ENCODE measurements at regions of chr2 and their contacts with region 1.

Region 1: GRCh38 chr2:233418761-233419625 is 64.7 kb downstream of the DGKD start:
- DNase-seq: peak; percentile 45 to 82 (median 58)
- ATAC-seq: peak; percentile 64 to 75
- H3K4me3 Mint-ChIP-seq: peak overlapping the region; percentile 87 to 96 (median 90)
- H3K27ac Mint-ChIP-seq: peak overlapping the region; percentile 94 to 99 (median 96)
- H3K4me1 Mint-ChIP-seq: peaks cover 56 to 100% (median 98%) of the 10 kb centered on the region in 4 donors
- H3K27me3 Mint-ChIP-seq: no peaks in the 10 kb centered on the region

Region 2: GRCh38 chr2:232795920-232796319 is 623.1 kb before region 1 on chr2:
- POLR2A ChIA-PET with region 1: no interaction called
- DNase-seq: no peak
- ATAC-seq: no peak
- H3K4me3 Mint-ChIP-seq: no peak overlapping the region
- H3K27ac Mint-ChIP-seq: peak overlapping the region in 5 of 10 donors; percentile 1 to 53 (median 18)
- H3K4me1 Mint-ChIP-seq: peaks cover 0 to 5% (median 1%) of the 10 kb centered on the region in 4 donors
- H3K27me3 Mint-ChIP-seq: no peaks in the 10 kb centered on the region

Region 3: GRCh38 chr2:233303252-233303651 is 115.7 kb before region 1 on chr2:
- POLR2A ChIA-PET with region 1: no interaction called
- DNase-seq: no peak
- ATAC-seq: no peak
- H3K4me3 Mint-ChIP-seq: no peak overlapping the region
- H3K27ac Mint-ChIP-seq: no peak overlapping the region
- H3K4me1 Mint-ChIP-seq: peaks cover 4 to 12% (median 9%) of the 10 kb centered on the region in 4 donors
- H3K27me3 Mint-ChIP-seq: no peaks in the 10 kb centered on the region

Region 4: GRCh38 chr2:233387667-233388528 is 31.1 kb before region 1 on chr2:
- POLR2A ChIA-PET with region 1: interaction called, 49 read pairs
- DNase-seq: peak in 6 of 10 donors; percentile 26 to 77 (median 58)
- ATAC-seq: peak; percentile 55 to 64
- H3K4me3 Mint-ChIP-seq: peak overlapping the region in 9 of 10 donors; percentile 2 to 88 (median 79)
- H3K27ac Mint-ChIP-seq: peak overlapping the region; percentile 89 to 96 (median 92)
- H3K4me1 Mint-ChIP-seq: peaks cover 44 to 82% (median 72%) of the 10 kb centered on the region in 4 donors
- H3K27me3 Mint-ChIP-seq: no peaks in the 10 kb centered on the region

Region 5: DNA sequence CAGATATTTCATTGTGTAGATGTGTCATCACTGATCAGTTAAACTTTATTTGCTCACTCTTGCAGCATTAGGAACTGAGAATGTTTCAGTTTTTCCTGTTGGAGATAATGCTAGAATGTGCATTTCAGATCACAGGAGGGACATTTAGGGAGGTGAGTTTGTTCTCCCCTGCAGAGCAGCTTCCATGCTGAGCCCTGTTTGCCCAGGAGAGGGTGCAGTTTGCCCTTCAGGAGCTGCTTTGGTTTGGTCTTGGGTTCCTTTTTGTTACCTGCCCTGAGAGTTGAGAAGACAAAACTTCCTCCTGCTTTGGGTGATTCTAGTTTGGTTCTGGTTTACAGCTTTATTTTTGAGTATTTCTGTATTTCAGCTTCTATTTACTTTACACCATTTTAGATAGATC is 14.8 kb before region 1 on chr2:
- POLR2A ChIA-PET with region 1: interaction called, 292 read pairs
- DNase-seq: peak; percentile 44 to 88 (median 70)
- ATAC-seq: peak; percentile 54 to 64
- H3K4me3 Mint-ChIP-seq: peak overlapping the region in 7 of 10 donors; percentile 30 to 76 (median 47)
- H3K27ac Mint-ChIP-seq: peak overlapping the region; percentile 53 to 94 (median 83)
- H3K4me1 Mint-ChIP-seq: peaks cover 46 to 89% (median 84%) of the 10 kb centered on the region in 4 donors
- H3K27me3 Mint-ChIP-seq: no peaks in the 10 kb centered on the region

Region 6: GRCh38 chr2:233434666-233435330 is 15.8 kb after region 1 on chr2:
- POLR2A ChIA-PET with region 1: interaction called, 13 read pairs
- DNase-seq: no peak
- ATAC-seq: no peak
- H3K4me3 Mint-ChIP-seq: no peak overlapping the region
- H3K27ac Mint-ChIP-seq: peak overlapping the region in 9 of 10 donors; percentile 60 to 86 (median 79)
- H3K4me1 Mint-ChIP-seq: peaks cover 20 to 38% (median 34%) of the 10 kb centered on the region in 4 donors
- H3K27me3 Mint-ChIP-seq: no peaks in the 10 kb centered on the region

Region 7: GRCh38 chr2:233443468-233444183 is 24.6 kb after region 1 on chr2:
- POLR2A ChIA-PET with region 1: interaction called, 20 read pairs
- DNase-seq: peak; percentile 74 to 92 (median 80)
- ATAC-seq: peak; percentile 96 to 99
- H3K4me3 Mint-ChIP-seq: peak overlapping the region in 4 of 10 donors; percentile 4 to 51 (median 34)
- H3K27ac Mint-ChIP-seq: peak overlapping the region; percentile 56 to 95 (median 82)
- H3K4me1 Mint-ChIP-seq: peaks cover 23 to 52% (median 38%) of the 10 kb centered on the region in 4 donors
- H3K27me3 Mint-ChIP-seq: no peaks in the 10 kb centered on the region